ENCODE measurements at regions of chr19 and their contacts with region 1.

Region 1: GRCh38 chr19:49817964-49818648 is at the start of gene MED25:
- DNase-seq: peak; percentile 89
- ATAC-seq: peak; percentile 82 to 86
- total RNA-seq, gene MED25: 48.7 to 55.6 TPM

Region 2: DNA sequence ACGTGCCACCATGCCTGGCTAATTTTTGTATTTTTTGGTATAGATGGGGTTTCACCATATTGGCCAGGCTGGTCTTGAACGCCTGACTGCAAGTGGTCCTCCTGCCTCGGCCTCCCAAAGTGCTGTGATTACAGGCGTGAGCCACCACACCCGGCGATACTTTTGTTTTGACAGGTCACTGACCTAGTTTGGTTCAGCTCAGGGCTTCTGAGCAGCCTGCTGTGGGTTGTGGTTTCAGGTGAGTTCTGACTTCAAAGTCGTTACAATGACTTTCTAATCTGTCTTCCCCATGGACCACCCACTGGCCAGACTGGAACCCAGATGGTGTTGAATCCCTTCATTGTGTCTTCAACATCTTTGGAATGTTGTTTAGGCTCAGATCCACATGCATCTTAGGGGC is 586.7 kb before region 1 on chr19:
- intact Hi-C with region 1: no loop called
- DNase-seq: no peak
- ATAC-seq: no peak

Region 3: GRCh38 chr19:49680398-49681351 is 137.4 kb before region 1 on chr19:
- intact Hi-C with region 1: loop called in 1 of 2 experiments (anchors 5 kb)
- DNase-seq: peak; percentile 91
- ATAC-seq: peak; percentile 2 to 9

Region 4: DNA sequence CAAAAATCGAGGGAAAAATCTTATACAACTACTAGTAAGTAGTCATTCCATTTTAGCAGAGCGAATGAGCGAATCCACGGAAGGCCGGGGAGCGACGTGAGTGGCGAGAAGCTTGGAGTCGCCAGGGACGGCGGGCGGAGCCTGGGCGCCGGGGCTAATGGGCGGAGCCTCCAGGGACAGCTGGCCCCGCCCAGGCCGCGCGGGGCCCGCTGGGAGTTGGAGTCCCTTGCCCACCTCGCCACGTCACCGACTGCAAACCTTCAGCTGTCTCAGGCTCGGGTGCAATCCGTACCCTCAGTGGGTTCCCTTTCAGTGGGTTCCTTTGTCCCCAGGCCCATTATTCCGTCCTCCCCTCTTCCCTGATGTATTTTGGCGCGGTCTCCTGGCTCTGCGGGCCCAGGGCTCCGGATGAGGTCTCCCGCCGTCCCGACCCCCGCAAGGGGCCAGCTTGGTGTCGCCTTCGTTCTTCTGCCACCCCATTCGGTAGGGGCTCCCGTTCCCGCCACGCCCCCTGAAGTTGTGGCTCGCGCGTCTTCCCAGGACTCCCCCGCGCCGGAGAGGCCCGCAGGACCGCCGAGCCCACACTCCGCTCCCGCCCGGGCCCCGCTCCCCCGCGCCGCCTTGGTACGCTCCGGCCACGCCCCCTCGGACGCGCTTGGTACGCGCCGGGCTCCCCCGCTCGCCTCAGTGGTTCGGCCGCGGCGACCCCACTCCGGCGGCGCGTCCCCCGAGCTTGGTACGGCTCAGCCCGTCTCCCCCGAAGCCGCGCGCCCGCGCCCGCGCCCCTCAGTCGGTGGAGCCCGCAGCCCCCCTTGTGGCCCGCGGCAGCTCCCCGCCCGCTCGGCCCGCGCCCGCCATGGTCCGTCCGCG is 32.6 kb after region 1 on chr19 and contains the start of gene PTOV1:
- intact Hi-C with region 1: loop called in 1 of 2 experiments (anchors 5 kb)
- DNase-seq: peak; percentile 94
- ATAC-seq: peak; percentile 95
- total RNA-seq, gene PTOV1: 113 to 122 TPM

Region 5: GRCh38 chr19:49869441-49870176 is 51.5 kb after region 1 on chr19:
- intact Hi-C with region 1: loop called (anchors 5 to 10 kb)
- DNase-seq: peak; percentile 96
- ATAC-seq: peak; percentile 84 to 87

Measured in left cardiac atrium (tissue), 4 donors.